Activated B cell treated with CpG ODN at 0.5 μM for 24 hours (primary cell): ENCODE measurements at regions of chr13 and their contacts with region 1.

Region 1: GRCh38 chr13:52194184-52194868 is 34.9 kb upstream of the NEK3 start:
- DNase-seq: peak; percentile 90
- ATAC-seq: peak; percentile 86
- H3K4me3 Mint-ChIP-seq: peak overlapping the region; percentile 99
- H3K27ac Mint-ChIP-seq: peak overlapping the region; percentile 98
- H3K4me1 Mint-ChIP-seq: peaks cover 31% of the 10 kb centered on the region
- H3K27me3 Mint-ChIP-seq: no peaks in the 10 kb centered on the region
- CTCF ChIP-seq: no peak

Region 2: DNA sequence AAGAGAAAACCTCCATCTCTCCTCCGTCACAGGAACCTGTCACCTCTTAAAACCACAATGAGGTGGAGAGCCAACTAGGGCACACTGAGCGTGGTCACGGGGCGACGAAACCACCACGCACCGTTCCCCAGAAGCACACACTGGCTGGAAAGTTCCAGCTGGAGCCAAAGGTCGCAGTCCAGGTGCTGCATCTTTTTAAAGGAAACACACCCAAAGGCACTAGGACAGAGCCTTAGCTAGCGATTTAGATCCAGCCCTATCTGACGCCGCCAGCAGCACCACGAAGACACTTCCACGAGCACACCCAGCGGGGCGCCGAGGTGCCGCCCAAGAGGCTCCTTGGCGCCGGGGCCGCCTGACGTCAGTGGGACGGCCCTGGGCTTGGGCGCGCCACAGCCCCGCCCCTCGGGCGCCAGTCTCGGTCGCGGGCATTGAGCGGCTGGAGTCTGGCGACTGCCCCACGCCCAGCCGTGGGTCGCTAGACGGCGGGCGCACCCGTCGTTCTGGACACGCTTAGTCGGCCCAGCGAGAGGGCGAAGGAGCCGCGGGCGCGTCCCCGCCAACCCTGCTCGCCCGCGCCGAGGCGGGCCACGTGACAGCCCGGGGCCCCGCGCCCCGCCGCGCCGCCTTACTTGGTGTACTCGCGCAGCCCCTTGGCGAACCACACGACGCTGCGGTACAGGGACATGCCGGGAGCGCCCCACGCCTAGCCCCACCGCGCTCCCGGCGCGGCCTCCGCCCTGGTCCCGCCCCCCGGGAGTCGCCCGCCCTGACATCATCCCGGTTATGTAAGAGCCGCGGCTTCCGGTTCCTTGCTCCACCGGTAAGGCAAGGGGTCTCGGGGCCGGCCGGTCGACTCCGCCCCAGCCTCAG is 390.7 kb before region 1 on chr13 and contains the start of gene DHRS12:
- CTCF ChIA-PET with region 1: no interaction called
- POLR2A ChIA-PET with region 1: interaction called, 4 read pairs
- intact Hi-C with region 1: loop called (anchors 5 kb)
- DNase-seq: peak; percentile 84
- ATAC-seq: peak; percentile 81
- H3K4me3 Mint-ChIP-seq: peak within 1 kb of the TSS; percentile 92
- H3K27ac Mint-ChIP-seq: peak within 1 kb of the TSS; percentile 99
- H3K4me1 Mint-ChIP-seq: peaks cover 47% of the 10 kb centered on the region
- H3K27me3 Mint-ChIP-seq: no peaks in the 10 kb centered on the region
- CTCF ChIP-seq: no peak
- total RNA-seq, gene DHRS12: 11.6 and 14.1 TPM in 2 replicates

Region 3: DNA sequence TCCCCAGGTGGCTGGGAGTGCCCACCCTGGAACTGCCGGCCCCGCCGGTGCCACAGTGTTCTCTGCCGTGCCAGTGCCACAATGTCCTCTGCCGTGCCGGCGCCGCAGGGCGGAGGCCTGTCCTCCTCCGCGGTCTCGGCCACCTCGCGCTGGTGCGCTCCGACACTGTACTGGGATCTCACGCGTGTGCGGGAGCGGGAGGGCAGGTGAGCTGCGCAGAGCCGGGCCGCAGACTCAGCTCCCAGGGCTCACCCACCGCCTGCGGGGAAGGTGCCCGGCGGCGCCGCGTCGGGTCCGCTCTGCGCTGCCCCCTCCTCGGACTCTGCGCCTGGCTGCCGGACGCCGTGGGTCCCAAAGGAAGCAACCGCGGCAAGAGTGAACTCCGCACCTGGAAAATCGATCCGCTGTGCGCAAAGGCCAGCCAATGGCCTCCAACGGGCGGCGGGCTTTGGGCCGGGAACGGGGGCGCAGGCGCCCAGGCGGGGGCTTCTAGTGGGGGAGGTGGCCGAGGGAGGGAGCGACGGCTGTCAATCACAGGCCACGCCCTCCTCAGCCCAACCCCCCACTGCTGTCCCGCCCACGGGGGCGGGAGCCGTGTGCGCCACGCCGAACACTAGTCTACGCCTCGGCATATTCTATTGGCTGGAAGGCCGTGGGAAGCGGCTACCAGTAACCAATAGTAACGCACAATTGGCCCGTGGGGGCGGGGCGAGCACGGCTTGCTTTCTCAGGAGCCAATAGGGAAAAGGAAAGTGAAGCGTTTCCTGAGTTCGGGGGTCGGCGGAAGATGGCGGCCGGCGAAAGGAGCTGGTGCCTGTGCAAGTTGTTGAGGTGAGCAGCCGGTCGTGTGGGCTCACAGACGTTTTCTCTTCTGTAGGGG is 182.5 kb before region 1 on chr13 and contains the start of gene ALG11:
- CTCF ChIA-PET with region 1: no interaction called
- POLR2A ChIA-PET with region 1: interaction called, 3 read pairs
- intact Hi-C with region 1: loop called (anchors 1 kb)
- DNase-seq: peak; percentile 98
- ATAC-seq: peak; percentile 99
- H3K4me3 Mint-ChIP-seq: peak within 1 kb of the TSS; percentile 99
- H3K27ac Mint-ChIP-seq: peak within 1 kb of the TSS; percentile 89
- H3K4me1 Mint-ChIP-seq: peaks cover 19% of the 10 kb centered on the region
- H3K27me3 Mint-ChIP-seq: peaks cover 16% of the 10 kb centered on the region
- CTCF ChIP-seq: no peak
- total RNA-seq, gene ALG11: 31.8 and 36.9 TPM in 2 replicates

Region 4: GRCh38 chr13:52159321-52160086 is 34.8 kb before region 1 on chr13 and contains the start of gene NEK3:
- CTCF ChIA-PET with region 1: no interaction called
- POLR2A ChIA-PET with region 1: interaction called, 13 read pairs
- intact Hi-C with region 1: loop called (anchors 1 kb)
- DNase-seq: peak; percentile 69
- ATAC-seq: peak; percentile 81
- H3K4me3 Mint-ChIP-seq: peak within 1 kb of the TSS; percentile 90
- H3K27ac Mint-ChIP-seq: peak within 1 kb of the TSS; percentile 81
- H3K4me1 Mint-ChIP-seq: peaks cover 24% of the 10 kb centered on the region
- H3K27me3 Mint-ChIP-seq: no peaks in the 10 kb centered on the region
- CTCF ChIP-seq: no peak
- total RNA-seq, gene NEK3: 9.1 and 12.0 TPM in 2 replicates